ENCODE measurements at regions of chr1 and their contacts with region 1.

Region 1: GRCh38 chr1:51341876-51342496 is 11.6 kb upstream of the TTC39A start:
- DNase-seq: no peak
- H3K4me3 ChIP-seq: no peak overlapping the region
- H3K27ac ChIP-seq: no peak overlapping the region
- H3K4me1 ChIP-seq: no peaks in the 10 kb centered on the region
- H3K27me3 ChIP-seq: no peaks in the 10 kb centered on the region
- CTCF ChIP-seq: no peak

Region 2: GRCh38 chr1:51518033-51518585 is 176.1 kb after region 1 on chr1:
- intact Hi-C with region 1: no loop called
- DNase-seq: peak; percentile 85
- H3K4me3 ChIP-seq: peak overlapping the region; percentile 69
- H3K27ac ChIP-seq: peak overlapping the region; percentile 94
- H3K4me1 ChIP-seq: peaks cover 20% of the 10 kb centered on the region
- H3K27me3 ChIP-seq: no peaks in the 10 kb centered on the region
- CTCF ChIP-seq: no peak

Region 3: DNA sequence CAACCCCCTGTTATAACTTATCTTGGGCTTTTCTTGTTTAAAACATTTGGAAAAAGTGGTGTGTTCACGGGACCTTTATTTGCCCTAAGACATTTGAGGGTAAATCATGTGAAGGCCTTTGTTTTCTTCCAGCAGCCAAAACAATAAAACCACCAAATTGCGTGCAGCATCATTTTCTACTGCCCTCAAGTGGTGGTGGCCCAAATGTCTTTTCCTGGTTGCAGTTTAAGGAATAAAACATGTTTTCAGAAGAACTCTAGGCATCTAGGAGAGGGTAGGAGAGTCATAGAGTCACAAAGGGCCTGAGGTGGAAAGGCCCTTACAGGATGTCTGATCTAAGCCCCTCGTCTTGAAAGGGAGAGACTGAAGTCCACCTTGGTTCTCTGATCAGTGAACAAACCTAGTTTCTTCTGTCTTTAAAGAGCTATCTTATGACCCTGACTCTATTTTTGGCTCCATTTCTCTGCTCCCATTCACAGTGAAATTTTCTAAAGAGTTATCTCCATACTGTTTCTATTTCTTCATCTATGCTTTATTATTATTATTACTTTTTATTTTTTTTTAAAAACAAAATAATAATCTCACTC is 193.1 kb after region 1 on chr1:
- intact Hi-C with region 1: loop called (anchors 10 kb)
- DNase-seq: peak; percentile 61
- H3K4me3 ChIP-seq: no peak overlapping the region
- H3K27ac ChIP-seq: no peak overlapping the region
- H3K4me1 ChIP-seq: no peaks in the 10 kb centered on the region
- H3K27me3 ChIP-seq: no peaks in the 10 kb centered on the region
- CTCF ChIP-seq: peak; percentile 67

Region 4: GRCh38 chr1:51661081-51661518 is 319.1 kb after region 1 on chr1:
- intact Hi-C with region 1: no loop called
- DNase-seq: no peak
- H3K4me3 ChIP-seq: no peak overlapping the region
- H3K27ac ChIP-seq: no peak overlapping the region
- H3K4me1 ChIP-seq: no peaks in the 10 kb centered on the region
- H3K27me3 ChIP-seq: no peaks in the 10 kb centered on the region
- CTCF ChIP-seq: no peak

Region 5: DNA sequence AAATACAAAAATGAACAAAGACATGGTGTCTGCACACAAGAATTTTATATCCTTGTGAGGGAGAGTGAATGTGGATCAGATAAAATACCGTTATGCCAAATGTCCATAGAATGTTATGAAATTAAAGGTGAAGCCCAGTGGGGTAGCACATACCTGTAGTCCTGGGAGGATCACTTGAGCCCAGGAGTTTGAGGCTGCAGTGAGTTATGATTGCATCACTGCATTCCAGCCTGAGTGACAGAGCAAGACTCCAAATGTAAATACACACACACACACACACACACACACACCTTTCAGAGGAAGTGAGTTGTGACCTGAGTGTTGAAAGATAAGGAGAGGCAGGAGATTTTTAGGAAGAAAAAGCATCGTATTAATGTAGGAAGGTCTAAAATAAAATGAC is 1472.5 kb after region 1 on chr1:
- intact Hi-C with region 1: no loop called
- DNase-seq: no peak
- H3K4me3 ChIP-seq: no peak overlapping the region
- H3K27ac ChIP-seq: no peak overlapping the region
- H3K4me1 ChIP-seq: no peaks in the 10 kb centered on the region
- H3K27me3 ChIP-seq: no peaks in the 10 kb centered on the region
- CTCF ChIP-seq: no peak